Left colon (tissue), 2 donors: ENCODE measurements at regions of chr6 and their contacts with region 1.

Region 1: GRCh38 chr6:137799950-137800568 is 67.0 kb upstream of the TNFAIP3 start:
- DNase-seq: no peak
- ATAC-seq: peak; percentile 19

Region 2: DNA sequence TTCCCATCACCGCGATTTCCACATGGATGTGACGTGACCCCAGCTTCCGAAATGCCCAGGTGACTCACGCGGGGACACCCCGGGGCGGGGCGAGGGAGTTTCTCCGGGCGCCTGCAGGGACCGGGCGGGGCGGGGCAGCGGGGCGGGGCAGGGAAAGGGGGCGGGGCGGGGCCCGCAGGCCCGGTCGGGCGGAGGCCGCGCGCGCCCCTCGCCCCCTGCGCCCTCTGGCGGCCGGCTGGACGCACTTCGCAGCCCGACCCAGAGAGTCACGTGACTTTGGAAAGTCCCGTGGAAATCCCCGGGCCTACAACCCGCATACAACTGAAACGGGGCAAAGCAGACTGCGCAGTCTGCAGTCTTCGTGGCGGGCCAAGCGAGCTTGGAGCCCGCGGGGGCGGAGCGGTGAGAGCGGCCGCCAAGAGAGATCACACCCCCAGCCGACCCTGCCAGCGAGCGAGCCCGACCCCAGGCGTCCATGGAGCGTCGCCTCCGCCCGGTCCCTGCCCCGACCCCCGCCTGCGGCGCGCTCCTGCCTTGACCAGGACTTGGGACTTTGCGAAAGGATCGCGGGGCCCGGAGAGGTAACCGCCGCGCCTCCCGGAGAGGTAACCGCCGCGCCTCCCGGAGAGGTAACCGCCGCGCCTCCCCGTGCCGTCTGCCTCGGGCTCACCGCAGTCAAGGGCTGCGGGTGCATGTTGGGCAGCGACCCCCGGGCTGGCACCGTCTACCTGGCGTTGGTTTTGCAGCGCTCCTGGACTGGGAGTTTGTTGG is 67.0 kb after region 1 on chr6 and contains the start of gene TNFAIP3:
- intact Hi-C with region 1: loop called in 1 of 2 experiments (anchors 10 kb)
- DNase-seq: peak; percentile 93
- ATAC-seq: peak; percentile 86
- total RNA-seq, gene TNFAIP3: 36.1 to 45.7 TPM